Panc1 (cell line): ENCODE measurements at regions of chr4 and their contacts with region 1.

Region 1: DNA sequence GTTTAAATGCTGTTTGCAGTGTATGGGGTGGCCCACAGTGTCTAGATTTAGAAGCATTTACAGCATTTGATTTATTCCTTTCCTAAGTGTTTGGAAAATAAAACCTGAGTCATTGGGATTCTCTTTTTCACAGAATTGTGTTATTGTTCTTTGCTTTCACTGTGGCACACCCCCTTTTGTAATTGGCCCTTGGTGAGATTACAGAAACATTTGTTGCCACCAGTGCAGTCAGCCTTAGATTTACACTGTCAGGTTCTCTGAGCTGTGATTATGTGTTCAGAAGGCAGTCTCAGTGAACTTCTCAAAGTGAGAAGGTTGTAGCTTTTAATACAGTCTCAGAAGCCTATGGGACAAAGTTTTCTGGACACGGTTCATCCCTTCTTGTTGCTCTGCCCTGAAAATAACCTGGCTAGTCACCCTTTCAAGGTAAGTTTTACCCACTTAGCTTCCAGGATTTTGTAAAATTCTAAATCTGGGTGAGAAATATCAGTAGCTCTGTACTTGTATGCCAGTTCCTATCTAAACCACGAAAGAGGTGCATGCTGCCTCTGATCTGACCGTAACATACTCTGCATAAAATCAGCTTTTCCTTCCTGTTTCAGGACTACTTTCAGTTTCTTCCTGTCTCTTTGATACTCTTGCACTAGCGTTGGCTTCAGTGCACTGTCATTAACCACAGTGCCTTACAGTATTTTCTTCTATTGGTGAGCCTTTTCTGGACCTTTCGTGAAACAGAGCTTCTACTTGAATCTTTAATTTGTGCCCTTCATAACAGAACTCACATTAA is 12.6 kb downstream of the RUFY3 start:
- DNase-seq: no peak
- ATAC-seq: peak; percentile 76
- H3K4me3 ChIP-seq: peak overlapping the region; percentile 13 to 43; a peak in 3 of 4 replicates
- H3K27ac ChIP-seq: peak overlapping the region; percentile 64
- H3K4me1 ChIP-seq: peaks cover 8% of the 10 kb centered on the region
- H3K27me3 ChIP-seq: no peaks in the 10 kb centered on the region
- CTCF ChIP-seq: no peak

Region 2: DNA sequence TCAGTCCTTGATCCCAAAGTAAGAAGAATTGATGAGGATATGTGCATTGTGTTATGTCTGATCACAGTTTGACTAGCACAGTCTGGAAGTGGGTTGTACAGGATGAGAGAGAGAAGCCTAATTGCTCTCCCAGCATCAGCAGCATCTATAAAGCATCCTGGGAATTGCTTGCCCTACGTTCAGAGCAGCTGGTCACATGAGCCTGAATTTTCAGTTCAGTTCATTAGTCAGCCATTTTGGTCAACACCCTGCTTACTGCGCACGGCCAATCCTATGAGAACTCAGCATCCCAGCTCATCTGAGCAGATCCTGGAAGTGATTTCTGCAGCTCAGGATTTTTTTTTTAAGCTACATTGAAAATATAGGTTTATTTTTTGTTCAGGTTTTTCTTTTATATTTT is 12.6 kb before region 1 on chr4 and contains the start of gene RUFY3:
- CTCF ChIA-PET with region 1: interaction called, 10 read pairs
- POLR2A ChIA-PET with region 1: interaction called, 3 read pairs
- in situ Hi-C with region 1: no loop called
- intact Hi-C with region 1: no loop called
- DNase-seq: no peak
- ATAC-seq: peak; percentile 73
- H3K4me3 ChIP-seq: peak within 1 kb of the TSS; percentile 28 to 29; a peak in 2 of 4 replicates
- H3K27ac ChIP-seq: peak within 1 kb of the TSS; percentile 48; the same call in 1 of the 2 replicates
- H3K4me1 ChIP-seq: peaks cover 6% of the 10 kb centered on the region
- H3K27me3 ChIP-seq: no peaks in the 10 kb centered on the region
- CTCF ChIP-seq: no peak
- total RNA-seq, gene RUFY3: 29.6 TPM

Region 3: DNA sequence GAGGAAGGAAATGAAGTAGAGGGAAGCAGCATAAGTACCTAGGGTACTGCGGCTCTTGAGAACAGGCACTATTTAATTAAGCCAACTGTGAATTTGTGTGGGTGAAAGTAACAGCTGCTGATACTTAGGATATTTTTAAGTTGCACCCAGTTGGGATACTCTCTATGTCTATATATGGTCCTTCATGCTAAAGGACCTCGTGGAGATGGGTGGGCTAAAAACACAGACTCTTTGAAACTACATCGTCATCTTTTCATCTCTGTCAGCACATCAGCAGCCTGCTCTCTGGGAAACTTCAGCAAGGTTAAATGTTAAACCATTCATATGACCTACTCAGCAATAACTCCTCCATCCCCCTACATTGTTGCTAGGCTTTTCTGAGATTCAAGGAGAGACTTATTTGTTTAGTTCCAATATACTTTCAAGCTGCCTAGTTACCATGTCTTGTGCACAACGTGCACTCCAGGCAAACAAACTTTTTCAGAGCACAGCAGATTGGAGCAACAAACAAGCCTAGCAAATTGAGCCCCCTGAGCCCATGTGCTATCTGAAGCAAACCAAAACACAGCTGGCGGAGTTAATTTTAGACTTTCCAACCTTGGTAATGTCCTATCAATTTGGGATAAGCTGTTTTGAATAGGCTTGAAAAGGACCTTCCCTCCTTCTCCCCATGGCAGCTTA is 161.6 kb after region 1 on chr4:
- CTCF ChIA-PET with region 1: no interaction called
- POLR2A ChIA-PET with region 1: no interaction called
- in situ Hi-C with region 1: no loop called
- intact Hi-C with region 1: no loop called
- DNase-seq: no peak
- ATAC-seq: no peak
- H3K4me3 ChIP-seq: no peak overlapping the region
- H3K27ac ChIP-seq: no peak overlapping the region
- H3K4me1 ChIP-seq: no peaks in the 10 kb centered on the region
- H3K27me3 ChIP-seq: no peaks in the 10 kb centered on the region
- CTCF ChIP-seq: no peak